Activated T-helper 1 cell treated with anti-CD3 and anti-CD28 coated beads, Interleukin-12 subunit alpha, Interleukin-12 subunit beta, Interleukin-2, Interleukin-4 antibody, amounts not matched to agents 30 ng/mL and 10 ng/mL and 1 ng/mL, durations not matched to agents 14 hours and 24 hours and 36 hours (primary cell): ENCODE measurements at regions of chr20 and their contacts with region 1.

Region 1: GRCh38 chr20:38875175-38875993 is 50.8 kb upstream of the FAM83D start:
- DNase-seq: peak; percentile 68
- H3K4me3 Mint-ChIP-seq: peak overlapping the region; percentile 66
- H3K27ac Mint-ChIP-seq: peak overlapping the region; percentile 96
- H3K4me1 Mint-ChIP-seq: peaks cover 95% of the 10 kb centered on the region
- H3K27me3 Mint-ChIP-seq: no peaks in the 10 kb centered on the region

Region 2: GRCh38 chr20:38805502-38805957 is 69.9 kb before region 1 on chr20 and contains the start of gene PPP1R16B:
- intact Hi-C with region 1: loop called (anchors 1 kb)
- DNase-seq: peak; percentile 79
- H3K4me3 Mint-ChIP-seq: peak within 1 kb of the TSS; percentile 90
- H3K27ac Mint-ChIP-seq: peak within 1 kb of the TSS; percentile 96
- H3K4me1 Mint-ChIP-seq: peaks cover 64% of the 10 kb centered on the region
- H3K27me3 Mint-ChIP-seq: no peaks in the 10 kb centered on the region
- total RNA-seq, gene PPP1R16B: 139 and 143 TPM in 2 replicates

Region 3: DNA sequence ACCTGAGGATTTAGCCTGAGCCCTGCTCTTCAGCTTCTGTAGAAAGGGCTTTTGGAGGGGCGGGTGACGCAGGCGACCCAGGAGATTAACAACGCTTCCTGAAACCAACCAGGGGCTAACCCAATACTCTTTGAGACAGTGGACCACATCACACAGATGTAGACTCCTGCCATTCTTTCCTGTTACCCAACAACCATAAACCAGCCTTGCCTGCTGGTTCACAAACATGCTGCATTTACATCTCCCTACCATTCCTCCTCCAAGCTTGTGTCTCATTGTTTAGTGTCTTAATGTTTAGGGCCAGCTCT is 41.6 kb before region 1 on chr20:
- intact Hi-C with region 1: loop called (anchors 1 kb)
- DNase-seq: no peak
- H3K4me3 Mint-ChIP-seq: peak overlapping the region; percentile 47
- H3K27ac Mint-ChIP-seq: peak overlapping the region; percentile 87
- H3K4me1 Mint-ChIP-seq: peaks cover 54% of the 10 kb centered on the region
- H3K27me3 Mint-ChIP-seq: no peaks in the 10 kb centered on the region

Region 4: DNA sequence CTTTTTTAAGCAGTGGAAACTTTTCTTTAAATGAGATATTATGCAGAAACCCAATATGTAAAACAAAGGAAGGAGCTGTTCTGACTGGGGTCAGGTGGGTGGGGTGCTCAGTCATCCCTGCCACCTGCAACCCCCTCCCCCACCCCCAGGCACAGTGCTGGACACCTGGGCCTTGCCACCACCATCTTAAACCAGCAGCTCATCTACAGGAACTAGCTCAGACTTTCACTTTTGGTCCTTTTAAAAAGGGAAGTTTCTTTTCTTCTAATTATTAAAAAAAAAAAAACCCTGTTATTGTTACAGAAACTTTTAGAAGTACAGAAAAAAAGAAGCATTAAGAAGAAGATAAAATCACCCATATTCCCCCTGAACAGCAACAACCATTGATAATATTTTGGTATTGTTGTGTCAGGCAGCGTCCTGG is 32.8 kb before region 1 on chr20:
- intact Hi-C with region 1: loop called (anchors 1 kb)
- DNase-seq: no peak
- H3K4me3 Mint-ChIP-seq: peak overlapping the region; percentile 78
- H3K27ac Mint-ChIP-seq: peak overlapping the region; percentile 97
- H3K4me1 Mint-ChIP-seq: peaks cover 82% of the 10 kb centered on the region
- H3K27me3 Mint-ChIP-seq: no peaks in the 10 kb centered on the region

Region 5: DNA sequence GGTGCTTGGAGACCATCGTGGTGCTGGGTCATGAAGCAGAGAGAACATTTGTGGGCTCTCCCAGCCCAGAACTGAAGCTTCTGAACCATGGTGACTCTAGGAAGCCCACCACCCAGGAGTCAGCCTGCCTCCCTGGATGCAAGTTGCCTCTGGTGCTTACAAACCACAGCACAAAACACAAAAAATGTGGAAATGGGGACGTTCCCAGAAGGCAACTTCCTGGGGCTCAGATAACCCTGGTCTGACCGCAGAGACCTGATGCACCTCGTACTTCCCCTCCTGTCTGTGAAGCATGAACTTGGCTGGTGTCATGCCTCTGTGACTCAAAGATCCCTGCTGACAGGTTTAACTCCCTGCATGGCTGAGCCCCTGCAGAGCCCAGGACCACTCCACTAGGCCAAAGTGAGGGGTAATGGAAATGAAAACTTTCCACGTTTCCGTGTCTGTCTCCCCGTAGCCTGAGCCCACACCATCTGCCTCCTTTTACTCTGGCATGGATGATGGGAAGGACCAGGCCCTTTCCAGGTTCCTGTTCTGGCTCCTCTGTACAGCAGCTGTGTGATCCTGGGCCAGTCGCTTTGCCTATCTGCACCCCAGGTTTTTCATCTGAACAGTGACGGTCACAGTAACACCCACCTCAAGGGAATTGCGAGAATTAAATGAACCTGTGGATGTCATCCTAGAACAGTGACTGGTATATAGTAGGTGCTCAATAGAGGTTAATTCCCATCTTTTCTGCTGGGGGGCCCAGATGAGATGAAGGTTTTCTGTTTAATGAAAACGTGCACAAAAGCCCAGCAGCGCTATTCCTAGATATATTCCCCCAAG is 12.1 kb before region 1 on chr20:
- intact Hi-C with region 1: loop called (anchors 1 kb)
- DNase-seq: peak; percentile 45
- H3K4me3 Mint-ChIP-seq: peak overlapping the region; percentile 50
- H3K27ac Mint-ChIP-seq: peak overlapping the region; percentile 89
- H3K4me1 Mint-ChIP-seq: peaks cover 68% of the 10 kb centered on the region
- H3K27me3 Mint-ChIP-seq: peaks cover 1% of the 10 kb centered on the region

Region 6: DNA sequence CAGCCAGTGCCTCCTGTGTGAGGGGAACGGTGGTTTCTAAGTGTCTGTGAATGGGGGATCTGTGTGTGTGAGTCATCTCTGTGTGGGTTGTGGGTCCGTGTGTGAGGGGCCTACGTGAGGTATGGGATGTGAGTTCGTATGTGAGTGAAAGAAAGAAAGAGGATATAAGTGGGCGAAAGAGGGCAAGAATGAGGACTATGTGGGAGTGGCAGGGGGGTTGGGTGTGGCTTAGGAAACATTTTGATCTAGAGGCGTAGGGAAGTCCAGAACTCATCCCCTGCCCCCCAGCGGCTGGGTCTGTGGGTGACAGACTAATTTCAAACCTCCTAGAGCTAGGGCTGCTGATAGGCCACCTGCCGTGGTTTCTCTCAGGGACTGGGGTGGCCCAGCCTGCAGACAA is 122.2 kb after region 1 on chr20:
- intact Hi-C with region 1: loop called (anchors 1 kb)
- DNase-seq: peak; percentile 15
- H3K4me3 Mint-ChIP-seq: peak overlapping the region; percentile 46
- H3K27ac Mint-ChIP-seq: peak overlapping the region; percentile 71
- H3K4me1 Mint-ChIP-seq: peaks cover 38% of the 10 kb centered on the region
- H3K27me3 Mint-ChIP-seq: no peaks in the 10 kb centered on the region